AG04450 (cell line): ENCODE measurements at regions of chr17 and their contacts with region 1.

Region 1: DNA sequence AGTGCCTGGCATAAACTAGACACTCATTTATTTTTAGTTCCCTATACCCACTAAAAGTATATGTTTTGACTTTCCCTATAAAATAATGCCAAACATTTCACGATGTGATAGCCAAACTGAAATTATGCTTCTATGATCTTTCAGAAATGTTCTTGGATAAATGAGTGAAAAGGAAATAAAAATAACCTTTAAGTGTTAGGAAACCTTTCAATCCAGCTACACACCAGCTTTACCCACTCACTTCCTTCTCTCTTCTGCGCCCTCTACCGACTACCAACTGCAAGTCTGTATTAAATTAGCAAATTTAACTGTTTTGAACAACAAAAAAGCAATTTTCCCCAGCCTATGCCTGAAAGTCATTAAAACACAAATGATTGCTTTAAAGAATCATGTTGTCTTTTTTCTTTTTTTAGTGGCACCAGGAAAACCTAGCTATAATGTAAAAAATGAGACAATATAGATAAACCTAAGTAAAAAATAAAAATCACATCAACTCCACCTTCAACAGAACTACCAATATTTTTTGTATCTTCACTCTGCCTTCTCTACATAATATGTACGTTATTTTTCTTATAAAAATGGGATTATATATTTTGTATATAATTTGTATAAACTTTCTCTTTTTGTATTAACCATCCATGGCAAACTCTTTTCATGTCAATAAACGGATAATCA is 13.2 kb upstream of the TMEM100 start:
- DNase-seq: no peak
- H3K4me3 ChIP-seq: no peak overlapping the region
- H3K27ac ChIP-seq: no peak overlapping the region
- H3K27me3 ChIP-seq: no peaks in the 10 kb centered on the region
- CTCF ChIP-seq: peak; percentile 79

Region 2: DNA sequence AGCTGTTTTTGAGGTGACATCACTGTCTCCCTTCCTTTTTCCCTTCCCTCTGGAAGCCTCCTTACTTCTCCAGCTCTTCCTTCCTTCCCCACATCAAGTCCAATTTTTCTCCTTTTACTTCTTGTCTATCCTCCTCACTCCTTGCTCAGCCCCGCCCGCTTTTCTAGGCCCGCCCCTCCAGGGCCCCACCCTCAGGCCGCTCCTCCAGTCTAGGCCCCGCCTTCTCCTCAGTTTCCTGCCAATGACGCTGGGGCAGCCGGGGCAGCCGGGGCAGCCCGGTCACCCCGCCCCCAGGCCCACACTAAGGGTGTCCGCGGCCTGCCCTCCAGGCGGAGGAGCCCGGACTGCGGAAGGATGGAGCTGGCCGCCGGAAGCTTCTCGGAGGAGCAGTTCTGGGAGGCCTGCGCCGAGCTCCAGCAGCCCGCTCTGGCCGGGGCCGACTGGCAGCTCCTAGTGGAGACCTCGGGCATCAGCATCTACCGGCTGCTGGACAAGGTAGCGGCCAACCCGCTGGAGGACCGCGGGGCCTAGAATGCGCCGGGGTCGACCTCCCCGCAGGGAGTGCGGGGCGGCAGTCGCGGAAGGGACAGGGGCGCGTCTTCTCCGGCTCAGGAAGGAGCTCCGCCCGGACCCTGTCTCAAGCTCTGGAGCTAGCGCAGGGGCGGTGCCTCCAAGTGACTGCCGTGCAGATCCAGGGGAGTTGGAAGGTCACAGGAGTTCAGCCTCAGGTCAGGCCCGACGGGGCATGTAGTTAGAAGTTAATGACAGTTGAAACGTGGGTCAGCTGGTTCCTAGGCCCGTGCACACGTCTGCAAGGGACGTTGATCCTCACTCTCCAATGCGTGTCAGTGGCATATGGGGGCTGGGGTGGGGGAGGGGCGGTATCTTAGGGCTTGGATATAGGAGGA is 15.1 kb after region 1 on chr17 and contains the start of gene PCTP:
- CTCF ChIA-PET with region 1: interaction called, 56 read pairs
- POLR2A ChIA-PET with region 1: interaction called, 5 read pairs
- DNase-seq: peak; percentile 68
- H3K4me3 ChIP-seq: peak within 1 kb of the TSS; percentile 89
- H3K27ac ChIP-seq: peak within 1 kb of the TSS; percentile 59
- H3K27me3 ChIP-seq: peaks cover 6% of the 10 kb centered on the region
- CTCF ChIP-seq: peak; percentile 57
- polyA plus RNA-seq, gene PCTP: 17.3 and 20.5 TPM in 2 replicates